ENCODE measurements at regions of chr18 and their contacts with region 1.

Region 1: GRCh38 chr18:12657684-12658425 is at the start of gene SPIRE1:
- DNase-seq: peak; percentile 52
- ATAC-seq: peak; percentile 90
- H3K4me3 ChIP-seq: peak within 1 kb of the TSS; percentile 91
- H3K27ac ChIP-seq: peak within 1 kb of the TSS; percentile 69
- H3K4me1 ChIP-seq: peaks cover 3% of the 10 kb centered on the region
- H3K27me3 ChIP-seq: no peaks in the 10 kb centered on the region
- CTCF ChIP-seq: peak; percentile 12; the same call in 1 of the 2 replicates
- POLR2A ChIP-seq: no peak; the same call in none of the 2 replicates
- RAD21 ChIP-seq: no peak; the same call in 1 of the 2 replicates
- total RNA-seq, gene SPIRE1: 28.3 and 31.4 TPM in 2 replicates

Region 2: DNA sequence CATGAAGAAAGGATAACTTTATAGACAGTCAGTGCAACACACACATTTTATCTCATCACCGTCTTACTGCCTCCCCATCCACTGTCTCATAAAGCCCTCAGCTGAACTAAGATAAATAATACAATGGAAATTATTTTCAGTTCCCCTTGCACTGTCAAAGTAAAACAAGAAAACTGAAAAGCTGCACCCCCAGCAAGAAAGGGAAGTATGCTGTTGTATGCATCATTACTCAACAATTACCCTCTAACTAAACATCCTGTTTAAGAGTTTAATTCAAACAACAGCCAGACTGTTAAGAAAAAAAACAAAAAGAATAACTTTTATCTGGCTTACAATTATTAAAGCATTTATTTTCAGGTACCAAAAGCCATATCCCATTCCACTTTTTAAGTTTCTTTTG is 774.7 kb before region 1 on chr18:
- CTCF ChIA-PET with region 1: no interaction called
- POLR2A ChIA-PET with region 1: no interaction called
- dilution Hi-C with region 1: no loop called
- in situ Hi-C with region 1: no loop called
- intact Hi-C with region 1: no loop called
- DNase-seq: peak; percentile 41
- ATAC-seq: peak; percentile 80
- H3K4me3 ChIP-seq: no peak overlapping the region
- H3K27ac ChIP-seq: no peak overlapping the region; the same call in 1 of the 2 replicates
- H3K4me1 ChIP-seq: no peaks in the 10 kb centered on the region
- H3K27me3 ChIP-seq: no peaks in the 10 kb centered on the region
- CTCF ChIP-seq: no peak
- POLR2A ChIP-seq: no peak
- RAD21 ChIP-seq: no peak

Region 3: DNA sequence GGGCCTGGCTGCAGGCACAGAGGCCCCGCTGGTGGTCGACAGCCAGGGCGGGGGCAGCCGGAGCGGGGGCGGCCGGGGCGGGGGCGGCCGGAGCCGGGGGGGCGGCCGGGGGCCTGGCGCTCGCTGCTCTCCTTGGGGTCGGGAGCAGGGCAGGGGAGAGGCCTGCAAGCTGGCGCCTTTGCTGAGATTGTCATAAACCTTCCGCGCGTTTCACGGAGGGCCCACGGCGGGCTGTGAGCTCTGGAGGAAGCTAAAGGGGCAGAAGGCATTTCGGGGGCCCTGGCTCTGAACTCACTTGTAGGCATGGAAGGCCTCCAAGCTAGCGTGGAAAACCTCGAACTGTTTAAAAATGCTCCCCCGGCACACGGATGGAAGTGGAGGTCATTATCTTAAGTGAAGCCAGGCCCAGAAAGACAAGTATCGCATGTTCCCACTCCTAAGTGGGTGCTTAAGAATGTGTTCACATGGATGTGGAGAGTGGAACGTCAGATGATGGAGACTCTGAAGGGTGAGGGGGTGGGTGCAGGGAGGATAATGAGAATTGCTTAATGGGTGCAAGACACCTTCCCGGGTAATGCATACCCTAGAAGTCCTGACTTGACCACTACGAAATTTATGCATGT is 249.5 kb before region 1 on chr18:
- CTCF ChIA-PET with region 1: no interaction called
- POLR2A ChIA-PET with region 1: no interaction called
- dilution Hi-C with region 1: no loop called
- in situ Hi-C with region 1: no loop called
- intact Hi-C with region 1: loop called (anchors 5 kb)
- DNase-seq: no peak
- ATAC-seq: peak; percentile 13; the same call in 1 of the 2 replicates
- H3K4me3 ChIP-seq: peak overlapping the region; percentile 68
- H3K27ac ChIP-seq: peak overlapping the region; percentile 86
- H3K4me1 ChIP-seq: peaks cover 4% of the 10 kb centered on the region
- H3K27me3 ChIP-seq: no peaks in the 10 kb centered on the region; the same call in 1 of the 2 replicates
- CTCF ChIP-seq: no peak
- POLR2A ChIP-seq: no peak
- RAD21 ChIP-seq: no peak

Region 4: DNA sequence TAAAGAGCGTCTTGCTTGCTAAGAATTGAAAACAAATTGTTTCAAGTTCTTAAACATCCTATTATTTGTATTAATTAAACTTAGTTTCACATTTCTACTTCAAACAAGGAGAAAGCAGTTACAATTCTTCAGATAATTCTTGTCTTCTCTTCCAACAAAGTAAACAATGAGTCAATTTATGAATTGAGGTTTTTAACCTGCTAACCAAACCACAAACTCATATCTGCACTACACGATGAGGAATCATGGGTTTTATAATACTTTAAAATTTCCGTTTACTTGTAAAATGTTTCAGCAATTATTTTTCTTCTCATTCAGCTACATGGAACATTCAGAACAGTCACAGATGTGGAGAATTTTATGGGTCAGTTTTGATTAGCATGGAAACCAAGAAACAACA is 114.2 kb before region 1 on chr18:
- CTCF ChIA-PET with region 1: interaction called, 5 read pairs
- POLR2A ChIA-PET with region 1: interaction called, 11 read pairs
- dilution Hi-C with region 1: no loop called
- in situ Hi-C with region 1: no loop called
- intact Hi-C with region 1: loop called (anchors 1 kb)
- DNase-seq: peak; percentile 68
- ATAC-seq: no peak; the same call in 1 of the 2 replicates
- H3K4me3 ChIP-seq: no peak overlapping the region
- H3K27ac ChIP-seq: no peak overlapping the region
- H3K4me1 ChIP-seq: no peaks in the 10 kb centered on the region
- H3K27me3 ChIP-seq: no peaks in the 10 kb centered on the region
- CTCF ChIP-seq: no peak
- POLR2A ChIP-seq: no peak
- RAD21 ChIP-seq: no peak

Region 5: GRCh38 chr18:12857215-12857905 is 199.5 kb after region 1 on chr18:
- CTCF ChIA-PET with region 1: no interaction called
- POLR2A ChIA-PET with region 1: no interaction called
- dilution Hi-C with region 1: no loop called
- in situ Hi-C with region 1: no loop called
- intact Hi-C with region 1: no loop called
- DNase-seq: no peak
- ATAC-seq: no peak
- H3K4me3 ChIP-seq: no peak overlapping the region
- H3K27ac ChIP-seq: no peak overlapping the region
- H3K4me1 ChIP-seq: 0 out of 2 replicates have a peak, but pooled peaks cover under 1% of the 10 kb centered on the region
- H3K27me3 ChIP-seq: no peaks in the 10 kb centered on the region
- CTCF ChIP-seq: no peak
- POLR2A ChIP-seq: no peak
- RAD21 ChIP-seq: no peak

Measured in IMR-90 (cell line).